Activated naive CD8-positive, alpha-beta T cell treated with anti-CD3 and anti-CD28 coated beads, Interleukin-2, amount 10 ng/mL, durations not matched to agents 7 days and 5 days (primary cell): ENCODE measurements at regions of chr9 and their contacts with region 1.

Region 1: DNA sequence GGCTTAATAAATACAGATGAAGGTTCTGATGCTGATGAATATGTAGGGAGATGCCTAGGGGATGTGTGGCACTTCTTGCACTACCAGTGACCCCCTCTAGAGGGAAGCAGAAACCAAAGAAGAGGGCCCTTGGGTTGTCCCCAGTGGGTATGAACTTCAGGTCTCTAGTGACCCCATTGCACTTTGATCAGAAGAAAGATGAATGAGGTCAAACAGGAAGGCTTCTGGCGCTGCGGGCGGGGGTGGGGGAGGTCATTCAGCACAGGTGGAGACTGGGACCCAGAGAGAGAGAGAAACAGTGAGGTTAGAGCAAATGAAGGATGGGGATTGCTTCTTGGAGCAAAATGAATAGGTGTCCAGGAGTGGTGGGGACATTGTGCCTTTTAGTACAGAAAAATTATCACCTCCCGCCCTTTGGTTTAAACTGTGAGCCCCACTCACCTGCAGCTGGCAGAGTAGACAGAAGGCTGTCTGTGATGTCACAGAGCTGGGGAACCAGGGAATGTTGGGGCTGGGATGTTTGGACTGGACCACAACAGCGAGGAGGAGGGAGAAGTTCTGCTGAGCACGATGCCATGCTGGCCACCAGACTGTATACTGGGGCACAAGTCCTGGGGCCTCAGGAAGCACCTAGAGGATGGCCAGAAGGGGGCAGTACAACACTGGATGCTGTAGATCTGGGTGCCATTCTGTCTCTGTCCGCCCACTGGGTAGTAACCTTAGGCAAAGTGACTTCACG is at the start of gene TEX48:
- DNase-seq: peak; percentile 73
- ATAC-seq: peak; percentile 93
- H3K4me3 Mint-ChIP-seq: peak within 1 kb of the TSS; percentile 73
- H3K27ac Mint-ChIP-seq: peak within 1 kb of the TSS; percentile 93
- H3K4me1 Mint-ChIP-seq: peaks cover 41% of the 10 kb centered on the region
- H3K27me3 Mint-ChIP-seq: no peaks in the 10 kb centered on the region
- total RNA-seq, gene TEX48: not detected

Region 2: DNA sequence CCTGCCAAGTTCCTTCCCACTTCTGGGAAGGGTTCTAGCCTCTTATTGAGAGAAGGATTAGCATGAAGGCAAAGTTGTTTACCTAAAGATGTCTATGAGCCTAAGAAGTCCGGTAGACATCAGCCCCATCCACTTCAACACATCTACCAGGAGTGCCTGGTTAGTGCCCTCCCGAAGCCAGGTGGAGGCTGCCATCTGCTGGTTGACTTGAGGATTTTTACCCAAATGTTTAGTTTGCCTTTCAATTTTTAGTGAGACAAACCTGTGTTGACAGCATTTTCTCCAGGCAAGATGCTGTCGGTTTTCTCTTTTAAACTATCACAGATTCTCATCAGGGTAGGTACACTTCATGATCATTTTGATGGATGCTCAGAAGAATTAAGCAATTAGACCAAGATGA is 332.2 kb after region 1 on chr9:
- POLR2A ChIA-PET with region 1: interaction called, 10 read pairs
- DNase-seq: peak; percentile 76
- ATAC-seq: peak; percentile 90
- H3K4me3 Mint-ChIP-seq: peak overlapping the region; percentile 26
- H3K27ac Mint-ChIP-seq: peak overlapping the region; percentile 73
- H3K4me1 Mint-ChIP-seq: peaks cover 49% of the 10 kb centered on the region
- H3K27me3 Mint-ChIP-seq: peaks cover 2% of the 10 kb centered on the region